Activated CD8-positive, alpha-beta T cell treated with anti-CD3 and anti-CD28 coated beads for 36 hours (primary cell): ENCODE measurements at regions of chr11 and their contacts with region 1.

Region 1: DNA sequence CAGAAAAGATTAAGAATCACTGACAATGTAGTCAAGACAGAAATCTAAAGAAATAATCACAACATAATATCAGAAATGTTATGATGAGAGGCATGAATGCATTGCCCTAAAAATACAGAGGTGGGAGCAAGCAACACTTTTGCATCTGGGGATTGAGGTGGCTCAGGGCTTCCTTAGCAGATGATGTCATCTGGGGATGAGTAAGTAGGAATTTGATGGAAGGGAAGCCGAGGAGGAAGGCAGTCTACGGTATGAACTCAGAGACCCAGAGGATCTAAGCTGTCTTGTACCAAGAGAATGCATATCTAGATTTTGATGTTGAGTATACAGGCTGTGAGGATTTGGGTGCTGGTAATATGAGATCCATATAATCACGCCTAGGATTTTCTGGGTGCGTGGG is 193.0 kb upstream of the SNX19 start:
- DNase-seq: no peak
- ATAC-seq: no peak
- H3K4me3 Mint-ChIP-seq: no peak overlapping the region
- H3K27ac Mint-ChIP-seq: no peak overlapping the region
- H3K4me1 Mint-ChIP-seq: no peaks in the 10 kb centered on the region
- H3K27me3 Mint-ChIP-seq: no peaks in the 10 kb centered on the region
- CTCF ChIP-seq: no peak

Region 2: GRCh38 chr11:130964058-130964792 is 145.0 kb before region 1 on chr11:
- CTCF ChIA-PET with region 1: no interaction called
- POLR2A ChIA-PET with region 1: no interaction called
- intact Hi-C with region 1: no loop called
- DNase-seq: no peak
- ATAC-seq: no peak
- H3K4me3 Mint-ChIP-seq: no peak overlapping the region
- H3K27ac Mint-ChIP-seq: no peak overlapping the region
- H3K4me1 Mint-ChIP-seq: no peaks in the 10 kb centered on the region
- H3K27me3 Mint-ChIP-seq: peaks cover 7% of the 10 kb centered on the region
- CTCF ChIP-seq: no peak

Region 3: GRCh38 chr11:132911186-132911585 is 1801.9 kb after region 1 on chr11:
- CTCF ChIA-PET with region 1: no interaction called
- POLR2A ChIA-PET with region 1: no interaction called
- intact Hi-C with region 1: loop called (anchors 5 kb)
- DNase-seq: no peak
- ATAC-seq: no peak
- H3K4me3 Mint-ChIP-seq: no peak overlapping the region
- H3K27ac Mint-ChIP-seq: no peak overlapping the region
- H3K4me1 Mint-ChIP-seq: no peaks in the 10 kb centered on the region
- H3K27me3 Mint-ChIP-seq: no peaks in the 10 kb centered on the region
- CTCF ChIP-seq: no peak